ENCODE measurements at regions of chr12 and their contacts with region 1.

Region 1: GRCh38 chr12:127381048-127381668 is 885.8 kb upstream of the TMEM132C start:
- H3K4me3 ChIP-seq: no peak overlapping the region
- H3K27ac ChIP-seq: no peak overlapping the region
- H3K4me1 ChIP-seq: no peaks in the 10 kb centered on the region
- CTCF ChIP-seq: peak; percentile 57

Region 2: DNA sequence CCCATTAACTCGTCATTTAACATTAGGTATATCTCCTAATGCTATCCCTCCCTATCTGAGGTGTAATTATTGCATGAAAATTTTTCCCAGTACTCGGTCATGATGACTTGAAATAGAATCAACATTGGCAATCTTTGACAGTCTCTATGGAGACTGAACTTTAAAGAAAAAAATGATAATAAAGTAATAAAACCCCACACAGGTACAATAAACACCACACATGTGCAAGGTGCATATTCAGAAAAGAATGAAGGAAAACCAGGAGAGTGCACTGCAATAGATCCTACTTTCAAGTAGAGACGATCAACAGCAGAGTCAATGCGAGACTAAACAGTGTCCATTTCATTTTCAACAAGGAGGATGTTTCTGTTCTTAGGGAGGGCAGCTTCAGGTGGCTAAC is 368.0 kb before region 1 on chr12:
- CTCF ChIA-PET with region 1: no interaction called
- POLR2A ChIA-PET with region 1: no interaction called
- H3K4me3 ChIP-seq: no peak overlapping the region
- H3K27ac ChIP-seq: no peak overlapping the region
- H3K4me1 ChIP-seq: no peaks in the 10 kb centered on the region
- CTCF ChIP-seq: no peak

Region 3: DNA sequence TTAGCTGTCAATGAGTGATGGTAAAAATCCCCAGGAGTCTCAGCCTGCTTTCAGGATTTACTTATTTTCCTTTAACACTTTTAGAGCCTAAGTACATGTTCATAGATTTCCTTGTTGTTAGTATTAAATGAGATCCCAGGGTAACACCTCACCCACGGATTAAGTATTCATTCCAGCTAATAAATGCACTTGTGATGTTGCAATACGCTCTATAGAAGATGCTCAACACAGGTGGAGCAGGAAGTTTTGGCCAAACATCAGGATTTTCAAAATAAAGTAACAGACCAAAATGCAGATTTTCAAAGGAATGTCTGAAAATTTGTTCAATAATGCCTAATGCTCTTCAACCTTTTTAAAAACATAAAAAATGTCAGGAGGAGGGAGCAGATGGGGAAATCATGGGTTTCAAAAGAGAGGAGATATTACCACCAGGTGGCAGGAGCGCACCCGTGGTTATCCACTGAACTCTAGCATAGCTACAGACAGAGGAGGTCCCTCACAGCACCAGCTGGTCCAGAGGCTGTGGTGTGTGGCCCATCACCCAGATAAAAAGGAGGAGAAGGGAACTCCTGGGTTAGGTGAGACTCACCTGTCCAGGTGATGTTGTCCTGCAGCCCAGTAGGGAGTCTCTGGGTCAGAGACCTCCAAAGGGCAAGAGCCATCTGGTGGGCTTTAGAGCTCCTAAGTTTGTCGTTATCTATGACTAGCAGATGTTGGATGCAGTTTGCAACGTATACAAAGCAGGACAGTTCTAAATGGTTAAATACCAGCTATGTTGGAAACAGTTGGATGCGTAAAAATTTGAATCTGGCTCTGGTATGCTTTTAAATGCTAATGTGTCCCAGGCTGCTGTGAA is 272.6 kb before region 1 on chr12:
- CTCF ChIA-PET with region 1: interaction called, 23 read pairs
- POLR2A ChIA-PET with region 1: no interaction called
- H3K4me3 ChIP-seq: no peak overlapping the region
- H3K27ac ChIP-seq: no peak overlapping the region
- H3K4me1 ChIP-seq: no peaks in the 10 kb centered on the region
- CTCF ChIP-seq: no peak

Region 4: GRCh38 chr12:127435439-127435838 is 54.3 kb after region 1 on chr12:
- CTCF ChIA-PET with region 1: no interaction called
- POLR2A ChIA-PET with region 1: no interaction called
- H3K4me3 ChIP-seq: no peak overlapping the region
- H3K27ac ChIP-seq: no peak overlapping the region
- H3K4me1 ChIP-seq: no peaks in the 10 kb centered on the region
- CTCF ChIP-seq: no peak